Endothelial cell of umbilical vein (primary cell): ENCODE measurements at regions of chr3 and their contacts with region 1.

Region 1: DNA sequence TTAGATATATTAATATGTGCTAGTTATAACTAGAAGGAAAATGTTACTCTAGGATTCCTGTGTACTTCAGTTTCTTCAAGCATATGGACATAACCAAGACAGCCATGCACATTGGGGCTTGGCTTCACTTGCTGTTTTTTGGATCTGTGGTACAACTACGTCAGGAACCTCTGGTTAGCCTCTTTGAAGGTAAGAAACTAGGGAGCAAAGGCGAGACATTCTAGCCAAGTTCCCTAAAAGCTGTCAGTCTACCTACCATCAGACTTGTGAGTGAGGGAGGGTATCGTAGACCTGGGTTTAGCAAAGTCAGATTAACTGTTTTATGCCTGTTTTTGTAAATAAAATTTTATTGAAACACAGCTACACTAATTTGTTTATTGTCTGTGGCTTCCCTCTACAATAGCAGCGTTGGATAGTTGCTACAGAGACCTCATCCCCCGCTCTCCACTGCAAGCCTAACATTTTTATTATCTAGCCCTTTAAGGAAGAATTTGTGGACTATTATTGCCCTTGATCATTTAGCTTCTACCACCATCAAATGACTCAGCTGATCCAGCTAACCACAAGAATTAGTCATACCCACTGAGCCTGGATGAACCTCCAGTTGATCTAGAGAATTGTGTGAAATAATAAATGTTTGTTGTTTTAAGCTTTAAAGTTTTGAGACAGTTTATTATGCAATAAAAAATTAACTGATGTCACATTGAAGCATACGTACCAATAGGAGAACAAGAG is 58.0 kb downstream of the RSRC1 start:
- DNase-seq: peak; percentile 75
- H3K4me3 ChIP-seq: no peak overlapping the region
- H3K27ac ChIP-seq: no peak overlapping the region
- H3K4me1 ChIP-seq: peaks cover 21% of the 10 kb centered on the region
- H3K27me3 ChIP-seq: no peaks in the 10 kb centered on the region
- CTCF ChIP-seq: no peak
- POLR2A ChIP-seq: no peak

Region 2: DNA sequence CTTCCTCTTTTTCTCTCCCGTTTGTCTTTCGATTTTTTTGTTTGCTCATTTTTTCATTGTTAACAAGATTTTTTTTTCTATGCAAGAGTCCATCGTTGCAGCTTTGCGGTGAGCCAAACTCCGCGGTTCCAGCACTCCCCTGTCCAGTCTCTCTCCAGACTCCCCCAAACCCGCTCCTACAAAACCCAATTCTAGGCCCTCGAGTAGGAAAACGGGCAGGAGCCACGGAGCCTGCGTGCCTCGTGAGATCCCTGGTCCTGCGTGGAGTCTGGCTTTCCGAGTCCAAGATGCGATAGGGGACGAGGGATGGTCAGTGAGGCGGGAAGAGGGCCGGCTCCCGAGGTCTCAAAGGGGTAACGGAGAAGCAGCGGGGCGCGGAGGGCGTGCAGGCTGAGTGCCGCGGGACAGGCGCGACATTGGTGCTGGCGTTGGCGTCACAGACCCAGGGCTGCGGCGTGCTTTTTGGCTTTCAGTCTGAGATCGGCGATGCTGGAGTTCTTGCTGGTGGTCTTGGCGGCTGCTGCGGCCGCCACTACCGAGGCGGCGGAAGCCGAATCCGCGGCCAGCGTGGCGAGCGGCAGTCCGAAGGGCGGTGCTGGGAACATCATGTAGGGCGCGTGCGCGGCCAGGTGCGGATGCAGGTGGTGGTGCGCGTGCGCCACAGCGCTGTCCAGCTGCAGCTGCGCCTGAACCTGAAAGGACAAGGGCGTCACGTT is 70.2 kb before region 1 on chr3:
- CTCF ChIA-PET with region 1: no interaction called
- POLR2A ChIA-PET with region 1: no interaction called
- dilution Hi-C with region 1: no loop called
- intact Hi-C with region 1: no loop called
- DNase-seq: peak; percentile 52
- H3K4me3 ChIP-seq: peak overlapping the region in 1 of 3 experiments; percentile 26
- H3K27ac ChIP-seq: no peak overlapping the region
- H3K4me1 ChIP-seq: peaks cover 6% of the 10 kb centered on the region
- H3K27me3 ChIP-seq: peaks cover 85 to 98% of the 10 kb centered on the region in 2 experiments
- CTCF ChIP-seq: no peak
- POLR2A ChIP-seq: no peak

Region 3: DNA sequence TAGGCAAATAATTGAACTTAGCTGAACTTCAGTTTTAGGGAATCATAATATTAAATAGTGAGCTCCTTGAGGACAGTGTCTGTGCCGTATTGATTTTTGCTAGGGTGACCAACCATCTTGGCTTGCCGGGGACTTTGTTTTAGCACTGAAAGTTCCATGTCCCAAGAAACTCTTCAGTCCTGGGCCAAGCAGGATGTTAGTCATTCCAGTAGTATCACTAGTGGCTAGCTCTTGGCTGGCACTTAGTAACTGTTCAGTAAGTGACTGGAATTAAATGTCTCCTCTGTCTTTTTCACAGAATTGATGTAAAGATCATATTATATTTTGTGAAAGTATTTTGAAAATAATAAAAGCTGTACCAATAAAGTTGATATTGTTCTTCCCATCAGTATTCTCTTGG is 15.7 kb before region 1 on chr3:
- CTCF ChIA-PET with region 1: interaction called, 10 read pairs
- POLR2A ChIA-PET with region 1: no interaction called
- dilution Hi-C with region 1: no loop called
- intact Hi-C with region 1: no loop called
- DNase-seq: peak; percentile 18
- H3K4me3 ChIP-seq: no peak overlapping the region
- H3K27ac ChIP-seq: no peak overlapping the region
- H3K4me1 ChIP-seq: peaks cover 2% of the 10 kb centered on the region
- H3K27me3 ChIP-seq: no peaks in the 10 kb centered on the region
- CTCF ChIP-seq: no peak
- POLR2A ChIP-seq: no peak

Region 4: GRCh38 chr3:158458470-158458869 is 290.6 kb after region 1 on chr3:
- CTCF ChIA-PET with region 1: no interaction called
- POLR2A ChIA-PET with region 1: no interaction called
- dilution Hi-C with region 1: no loop called
- intact Hi-C with region 1: no loop called
- DNase-seq: no peak
- H3K4me3 ChIP-seq: no peak overlapping the region
- H3K27ac ChIP-seq: no peak overlapping the region
- H3K4me1 ChIP-seq: no peaks in the 10 kb centered on the region
- H3K27me3 ChIP-seq: no peaks in the 10 kb centered on the region
- CTCF ChIP-seq: no peak
- POLR2A ChIP-seq: no peak